ENCODE measurements at regions of chr14 and their contacts with region 1.

Region 1: GRCh38 chr14:105490572-105491366 is at the start of gene TEDC1:
- DNase-seq: peak; percentile 100
- H3K4me3 Mint-ChIP-seq: peak within 1 kb of the TSS; percentile 92
- H3K27ac Mint-ChIP-seq: peak within 1 kb of the TSS; percentile 95
- H3K4me1 Mint-ChIP-seq: peaks cover 28% of the 10 kb centered on the region
- H3K27me3 Mint-ChIP-seq: no peaks in the 10 kb centered on the region
- total RNA-seq, gene TEDC1: 44.1 to 47.0 TPM

Region 2: DNA sequence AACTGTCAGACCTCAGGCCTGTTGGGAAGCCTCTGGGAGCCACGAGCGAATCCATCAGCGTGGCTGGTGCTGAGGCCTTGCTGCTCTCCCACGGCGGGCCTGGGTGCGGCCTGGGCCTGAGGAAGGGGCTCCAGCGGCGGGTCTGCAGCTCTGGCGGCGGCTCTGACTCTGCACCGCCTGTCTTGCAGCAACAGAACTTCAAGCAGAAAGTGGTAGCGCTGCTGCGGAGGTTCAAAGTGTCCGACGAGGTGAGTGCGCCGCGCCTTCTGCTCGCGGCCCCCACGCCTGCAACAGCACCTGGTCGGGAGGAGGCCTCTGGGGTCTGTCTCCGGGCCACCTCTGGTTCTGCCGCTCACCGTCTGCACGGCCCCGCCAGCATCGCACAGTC is 121.1 kb before region 1 on chr14:
- CTCF ChIA-PET with region 1: interaction called, 81 read pairs
- POLR2A ChIA-PET with region 1: interaction called, 19 read pairs
- DNase-seq: no peak
- H3K4me3 Mint-ChIP-seq: no peak overlapping the region
- H3K27ac Mint-ChIP-seq: no peak overlapping the region
- H3K4me1 Mint-ChIP-seq: peaks cover 11% of the 10 kb centered on the region
- H3K27me3 Mint-ChIP-seq: no peaks in the 10 kb centered on the region

Region 3: DNA sequence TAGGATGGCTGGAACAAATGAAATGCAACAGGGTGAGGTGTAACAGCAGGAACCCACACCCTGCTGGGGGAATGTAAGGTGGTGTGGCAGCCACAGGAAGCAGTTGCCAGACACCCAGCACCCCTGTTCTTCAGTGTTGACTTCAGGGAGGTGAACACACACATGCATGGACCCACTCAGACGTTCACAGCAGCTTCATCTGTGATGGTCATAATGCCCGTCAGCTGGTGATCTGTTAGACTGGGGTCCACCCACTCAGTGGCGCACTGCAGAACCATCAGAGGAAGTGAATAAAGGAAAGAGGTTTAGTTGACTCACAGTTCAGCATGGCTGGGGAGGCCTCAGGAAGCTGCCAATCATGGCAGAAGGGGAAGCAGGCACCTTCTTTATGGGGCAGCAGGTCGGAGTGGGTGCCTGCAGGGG is 115.1 kb before region 1 on chr14:
- CTCF ChIA-PET with region 1: interaction called, 81 read pairs
- POLR2A ChIA-PET with region 1: interaction called, 19 read pairs
- DNase-seq: peak; percentile 59
- H3K4me3 Mint-ChIP-seq: no peak overlapping the region
- H3K27ac Mint-ChIP-seq: peak overlapping the region; percentile 94
- H3K4me1 Mint-ChIP-seq: peaks cover 31% of the 10 kb centered on the region
- H3K27me3 Mint-ChIP-seq: no peaks in the 10 kb centered on the region

Region 4: GRCh38 chr14:105414456-105415371 is 76.1 kb before region 1 on chr14:
- CTCF ChIA-PET with region 1: interaction called, 6 read pairs
- POLR2A ChIA-PET with region 1: interaction called, 12 read pairs
- DNase-seq: peak; percentile 64
- H3K4me3 Mint-ChIP-seq: peak overlapping the region; percentile 58
- H3K27ac Mint-ChIP-seq: no peak overlapping the region
- H3K4me1 Mint-ChIP-seq: peaks cover 7% of the 10 kb centered on the region
- H3K27me3 Mint-ChIP-seq: peaks cover 33% of the 10 kb centered on the region

Region 5: GRCh38 chr14:105473677-105474482 is 16.9 kb before region 1 on chr14:
- CTCF ChIA-PET with region 1: interaction called, 7 read pairs
- POLR2A ChIA-PET with region 1: interaction called, 19 read pairs
- DNase-seq: peak; percentile 84
- H3K4me3 Mint-ChIP-seq: peak overlapping the region; percentile 71
- H3K27ac Mint-ChIP-seq: no peak overlapping the region
- H3K4me1 Mint-ChIP-seq: peaks cover 11% of the 10 kb centered on the region
- H3K27me3 Mint-ChIP-seq: peaks cover 22% of the 10 kb centered on the region

Region 6: DNA sequence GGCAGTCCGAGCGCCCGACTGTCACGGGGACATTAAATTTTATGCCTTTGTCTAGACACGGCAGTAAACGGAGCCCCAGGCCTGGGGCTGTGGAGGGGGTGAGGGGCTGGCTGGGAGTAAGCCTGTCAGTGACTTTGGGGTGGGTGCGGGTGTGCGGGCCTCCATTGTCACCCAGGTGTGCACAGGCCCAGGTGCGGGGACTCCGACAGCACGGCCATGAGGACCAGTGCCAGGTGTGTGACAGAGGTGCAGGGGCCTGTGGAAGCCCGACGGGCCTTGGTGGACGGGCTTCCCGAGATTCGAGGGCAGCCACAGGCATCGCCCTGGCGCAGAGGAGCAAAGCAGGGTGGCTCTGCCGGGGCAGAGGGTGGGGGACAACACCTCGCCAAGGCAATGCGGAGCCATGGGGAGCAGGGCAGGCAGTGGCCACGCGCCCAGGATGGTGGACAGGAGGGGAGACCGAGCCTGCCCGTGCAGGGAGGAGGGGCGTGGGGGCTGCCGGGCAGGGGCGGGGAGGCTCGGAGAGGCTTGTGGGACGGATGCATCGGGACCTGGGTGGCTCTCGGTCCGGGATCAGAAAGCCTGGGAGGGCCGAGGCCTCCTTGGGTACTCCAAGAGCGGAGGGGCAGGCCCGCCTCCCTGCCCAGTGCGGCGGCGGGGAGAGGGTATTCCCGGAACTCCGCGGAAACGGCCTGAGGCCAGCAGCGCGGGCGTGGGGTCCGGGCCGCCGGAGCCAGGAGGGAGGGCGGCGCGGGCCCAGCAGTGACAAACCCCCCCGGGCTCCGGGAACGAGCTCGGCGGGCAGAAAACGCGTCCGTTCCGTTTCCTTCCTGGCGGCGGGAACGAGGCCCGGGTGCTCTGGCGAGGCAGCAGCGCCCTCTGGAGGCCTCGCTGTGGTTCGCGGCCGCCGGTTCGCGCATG is 37.2 kb after region 1 on chr14:
- CTCF ChIA-PET with region 1: interaction called, 12 read pairs
- POLR2A ChIA-PET with region 1: interaction called, 36 read pairs
- DNase-seq: peak; percentile 84
- H3K4me3 Mint-ChIP-seq: peak overlapping the region; percentile 68
- H3K27ac Mint-ChIP-seq: no peak overlapping the region
- H3K4me1 Mint-ChIP-seq: peaks cover 39% of the 10 kb centered on the region
- H3K27me3 Mint-ChIP-seq: peaks cover 24% of the 10 kb centered on the region

Measured in activated CD4-positive, alpha-beta memory T cell treated with anti-CD3 and anti-CD28 coated beads, Interleukin-2, amount 10 ng/mL, durations not matched to agents 7 days and 5 days (primary cell).